ENCODE measurements at regions of chr6 and their contacts with region 1.

Region 1: GRCh38 chr6:154733012-154733625 is at the start of gene SCAF8:
- DNase-seq: peak; percentile 86
- ATAC-seq: peak; percentile 91 to 92
- total RNA-seq, gene SCAF8: 37.8 to 44.1 TPM

Region 2: GRCh38 chr6:154675602-154676088 is 57.5 kb before region 1 on chr6:
- intact Hi-C with region 1: loop called in 1 of 2 experiments (anchors 5 kb)
- DNase-seq: peak; percentile 84
- ATAC-seq: peak; percentile 98